Posterior vena cava (tissue), 2 donors: ENCODE measurements at regions of chr3 and their contacts with region 1.

Region 1: GRCh38 chr3:11643605-11644087 is at the start of gene VGLL4:
- DNase-seq: peak; percentile 96
- total RNA-seq, gene VGLL4: 50.3 to 78.7 TPM

Region 2: GRCh38 chr3:10655105-10655504 is 988.5 kb before region 1 on chr3:
- intact Hi-C with region 1: no loop called
- DNase-seq: no peak

Region 3: DNA sequence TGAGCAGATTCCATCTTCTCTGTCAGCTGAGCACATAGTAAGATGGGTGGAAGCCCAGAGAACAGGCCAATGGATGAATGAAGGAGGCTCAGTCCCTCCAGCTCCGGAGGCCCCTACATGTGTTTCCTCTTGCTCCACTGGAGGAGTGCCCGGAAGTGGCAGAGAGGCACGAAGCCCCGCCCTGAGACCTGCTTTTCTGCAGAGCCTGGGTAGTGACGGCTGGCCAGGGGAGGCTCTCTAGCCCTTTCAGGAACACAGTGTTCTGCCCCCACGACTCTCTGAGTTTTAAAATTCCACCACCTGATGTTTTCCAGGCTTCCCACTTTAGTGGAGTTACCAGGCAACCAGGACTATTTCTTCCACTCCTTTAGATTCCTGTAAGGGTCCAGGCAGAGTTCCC is 977.0 kb before region 1 on chr3:
- intact Hi-C with region 1: no loop called
- DNase-seq: no peak

Region 4: GRCh38 chr3:11385891-11386290 is 257.8 kb before region 1 on chr3:
- intact Hi-C with region 1: loop called in 1 of 2 experiments (anchors 5 kb)
- DNase-seq: no peak

Region 5: GRCh38 chr3:11568503-11569155 is 75.0 kb before region 1 on chr3:
- intact Hi-C with region 1: loop called in 1 of 2 experiments (anchors 10 kb)
- DNase-seq: peak; percentile 95

Region 6: DNA sequence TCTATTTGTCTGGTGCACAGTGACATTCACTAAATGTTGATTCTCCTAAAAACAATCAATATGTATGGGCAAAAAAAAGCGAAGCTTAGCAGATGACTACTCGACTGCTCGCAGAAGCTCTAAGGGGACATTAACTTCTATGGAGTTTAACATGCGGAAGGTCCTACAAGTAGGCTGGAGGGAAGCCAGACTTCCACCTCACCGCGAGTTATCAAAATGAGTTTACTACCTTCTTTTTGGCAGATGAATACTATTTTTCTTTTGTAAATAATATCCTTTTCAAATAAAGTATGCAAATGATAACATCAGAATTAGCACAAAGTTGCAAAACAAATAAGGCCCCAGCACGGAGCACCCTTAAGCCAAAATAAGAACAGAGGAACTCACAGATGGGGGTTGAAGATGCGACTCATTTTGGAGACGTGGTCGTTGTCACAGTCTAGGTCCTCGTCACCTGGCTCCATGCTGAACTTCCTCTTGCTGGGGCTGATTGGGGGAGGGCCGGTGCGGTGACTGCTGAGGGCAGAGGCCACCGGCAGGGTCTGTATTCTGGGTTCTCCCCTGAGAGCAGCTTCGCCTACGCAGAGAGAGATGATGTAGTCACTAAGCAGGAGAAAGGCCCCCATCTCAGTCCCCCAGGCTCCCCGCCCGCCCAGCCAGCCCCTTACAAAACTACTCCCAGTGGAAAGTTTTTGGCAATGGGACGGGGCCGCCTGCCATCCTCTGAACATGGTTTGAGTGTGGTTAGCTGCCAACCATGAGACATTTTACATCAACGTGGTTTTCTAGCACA is 42.0 kb before region 1 on chr3:
- intact Hi-C with region 1: loop called in 1 of 2 experiments (anchors 5 kb)
- DNase-seq: peak; percentile 89

Region 7: GRCh38 chr3:11846281-11847034 is 202.8 kb after region 1 on chr3 and contains the start of gene TAMM41:
- intact Hi-C with region 1: no loop called
- DNase-seq: peak; percentile 98
- total RNA-seq, gene TAMM41: 15.5 to 15.8 TPM